CD4-positive, alpha-beta T cell (primary cell): ENCODE measurements at regions of chr1 and their contacts with region 1.

Region 1: GRCh38 chr1:211705467-211706091 is 30.2 kb upstream of the NEK2 start:
- DNase-seq: no peak
- ATAC-seq: no peak
- H3K4me3 ChIP-seq: no peak overlapping the region
- H3K4me3 Mint-ChIP-seq: no peak overlapping the region
- H3K27ac ChIP-seq: no peak overlapping the region
- H3K27ac Mint-ChIP-seq: no peak overlapping the region
- H3K4me1 ChIP-seq: no peaks in the 10 kb centered on the region
- H3K4me1 Mint-ChIP-seq: no peaks in the 10 kb centered on the region
- H3K27me3 ChIP-seq: no peaks in the 10 kb centered on the region
- H3K27me3 Mint-ChIP-seq: no peaks in the 10 kb centered on the region
- CTCF ChIP-seq: no peak

Region 2: DNA sequence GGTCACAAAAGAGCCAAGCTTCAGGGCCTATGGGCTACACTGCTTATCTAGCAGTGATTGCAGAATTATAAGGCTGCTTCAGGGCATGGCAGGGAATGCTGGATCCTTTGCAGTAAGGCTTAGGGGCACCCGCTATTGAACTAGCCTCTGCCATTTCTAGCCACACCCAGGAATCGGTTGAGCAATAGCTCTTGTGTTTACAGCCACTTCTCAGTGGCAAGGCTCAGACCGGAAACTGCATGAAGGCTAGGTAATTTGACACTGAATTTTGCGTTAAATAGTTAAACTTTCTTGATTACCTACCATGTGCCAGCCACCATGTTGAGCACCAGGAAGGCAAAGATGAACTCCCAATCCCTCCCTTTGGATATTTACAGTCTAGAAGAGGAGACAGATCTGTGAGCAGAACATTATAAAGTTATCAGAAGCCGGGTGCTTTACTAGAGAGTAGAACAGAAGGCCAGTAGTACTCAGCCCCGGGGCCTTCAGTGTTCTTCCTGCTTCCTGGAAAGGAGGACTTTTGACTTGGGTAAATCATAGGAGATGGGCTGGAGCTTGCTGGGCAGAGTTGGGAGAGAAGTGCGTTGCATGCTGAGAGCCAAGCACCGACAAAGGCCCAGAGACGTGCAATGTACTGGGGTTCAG is 223.5 kb after region 1 on chr1:
- CTCF ChIA-PET with region 1: no interaction called
- POLR2A ChIA-PET with region 1: no interaction called
- intact Hi-C with region 1: loop called in 1 of 2 experiments (anchors 10 kb)
- DNase-seq: no peak
- ATAC-seq: no peak
- H3K4me3 ChIP-seq: no peak overlapping the region
- H3K4me3 Mint-ChIP-seq: no peak overlapping the region
- H3K27ac ChIP-seq: no peak overlapping the region
- H3K27ac Mint-ChIP-seq: no peak overlapping the region
- H3K4me1 ChIP-seq: no peaks in the 10 kb centered on the region
- H3K4me1 Mint-ChIP-seq: no peaks in the 10 kb centered on the region
- H3K27me3 ChIP-seq: peaks cover 0 to 4% of the 10 kb centered on the region in 2 experiments
- H3K27me3 Mint-ChIP-seq: peaks cover 14% of the 10 kb centered on the region
- CTCF ChIP-seq: no peak